HCT116 (cell line): ENCODE measurements at regions of chr6 and their contacts with region 1.

Region 1: GRCh38 chr6:139364302-139364981 is 10.0 kb downstream of the CITED2 start:
- DNase-seq: no peak
- ATAC-seq: peak; percentile 67
- H3K4me3 ChIP-seq: no peak overlapping the region
- H3K27ac ChIP-seq: no peak overlapping the region
- H3K4me1 ChIP-seq: peaks cover 5 to 6% of the 10 kb centered on the region in 2 experiments; a peak in 3 of 4 replicates
- H3K27me3 ChIP-seq: no peaks in the 10 kb centered on the region
- CTCF ChIP-seq: peak; percentile 19 to 82 (median 69); a peak in 3 of 6 replicates
- POLR2A ChIP-seq: no peak
- RAD21 ChIP-seq: peak; percentile 94

Region 2: GRCh38 chr6:138115877-138116660 is 1248.4 kb before region 1 on chr6:
- CTCF ChIA-PET with region 1: interaction called, 26 read pairs
- POLR2A ChIA-PET with region 1: no interaction called
- RAD21 ChIA-PET with region 1: no interaction called
- intact Hi-C with region 1: loop called (anchors 1 kb)
- DNase-seq: peak; percentile 58
- ATAC-seq: peak; percentile 92
- H3K4me3 ChIP-seq: no peak overlapping the region; a peak in 1 of 4 replicates
- H3K27ac ChIP-seq: no peak overlapping the region
- H3K4me1 ChIP-seq: peaks cover 0 to 8% of the 10 kb centered on the region in 2 experiments; a peak in 1 of 4 replicates
- H3K27me3 ChIP-seq: no peaks in the 10 kb centered on the region
- CTCF ChIP-seq: peak; percentile 48 to 85 (median 78); a peak in 5 of 6 replicates
- POLR2A ChIP-seq: no peak
- RAD21 ChIP-seq: peak; percentile 94

Region 3: GRCh38 chr6:138692058-138692977 is 672.1 kb before region 1 on chr6:
- CTCF ChIA-PET with region 1: no interaction called
- POLR2A ChIA-PET with region 1: no interaction called
- RAD21 ChIA-PET with region 1: no interaction called
- intact Hi-C with region 1: loop called (anchors 5 kb)
- DNase-seq: no peak
- ATAC-seq: peak; percentile 58
- H3K4me3 ChIP-seq: peak overlapping the region; percentile 72 to 83
- H3K27ac ChIP-seq: peak overlapping the region; percentile 88
- H3K4me1 ChIP-seq: peaks cover 14 to 25% of the 10 kb centered on the region in 2 experiments
- H3K27me3 ChIP-seq: no peaks in the 10 kb centered on the region
- CTCF ChIP-seq: peak; percentile 38 to 79 (median 77); a peak in 4 of 6 replicates
- POLR2A ChIP-seq: no peak
- RAD21 ChIP-seq: peak; percentile 33; the same call in 1 of the 2 replicates

Region 4: DNA sequence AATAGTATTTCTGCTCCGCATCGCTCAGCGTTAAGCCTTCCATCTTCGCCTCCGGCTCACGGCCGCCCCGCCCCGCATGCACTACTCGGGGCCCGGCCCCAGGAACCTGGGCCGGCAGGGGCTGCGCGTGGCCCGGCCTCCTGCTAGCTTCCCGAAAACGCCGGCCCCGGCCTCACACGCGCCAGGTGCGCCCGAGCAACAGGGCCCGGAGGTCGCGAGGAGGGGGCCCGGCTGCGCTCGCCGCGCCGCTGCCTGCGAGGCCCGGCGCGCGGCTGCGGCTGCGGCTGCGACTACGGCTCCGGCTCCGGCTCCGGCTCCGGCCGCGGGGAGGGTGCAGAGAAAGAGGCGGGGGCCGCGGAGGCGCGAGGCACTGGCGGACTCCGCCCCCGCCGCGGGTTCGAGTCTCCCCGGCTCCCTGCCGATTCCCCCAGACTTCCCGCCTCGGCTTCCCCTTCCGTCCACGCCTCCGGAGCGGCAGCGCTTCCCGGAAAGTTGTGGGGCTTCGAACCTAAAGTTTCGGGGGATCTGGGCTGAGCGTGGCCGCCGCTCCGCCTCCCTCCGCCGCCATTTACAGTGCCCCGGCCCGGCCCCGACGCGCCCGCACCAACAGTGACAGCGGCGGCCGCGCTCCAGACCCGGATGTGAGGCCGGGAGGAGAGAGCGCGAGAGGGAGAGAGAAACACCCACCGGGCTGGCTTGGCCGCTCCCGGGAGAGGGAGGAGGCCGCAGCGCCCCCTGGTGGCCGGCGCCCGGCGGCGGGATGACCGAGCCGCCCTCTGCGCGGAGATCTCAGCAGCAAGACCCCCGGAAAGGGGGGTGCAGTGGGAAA is 376.6 kb before region 1 on chr6 and contains the start of gene REPS1:
- CTCF ChIA-PET with region 1: interaction called, 3 read pairs
- POLR2A ChIA-PET with region 1: no interaction called
- RAD21 ChIA-PET with region 1: no interaction called
- intact Hi-C with region 1: loop called (anchors 10 kb)
- DNase-seq: peak; percentile 78
- ATAC-seq: peak; percentile 90
- H3K4me3 ChIP-seq: peak within 1 kb of the TSS; percentile 81 to 83
- H3K27ac ChIP-seq: peak within 1 kb of the TSS; percentile 72
- H3K4me1 ChIP-seq: peaks cover 16 to 36% of the 10 kb centered on the region in 2 experiments; a peak in 3 of 4 replicates
- H3K27me3 ChIP-seq: no peaks in the 10 kb centered on the region
- CTCF ChIP-seq: peak; percentile 73 to 82 (median 80)
- POLR2A ChIP-seq: peak; percentile 29
- RAD21 ChIP-seq: peak; percentile 80
- total RNA-seq, gene REPS1: 52.7 TPM

Region 5: DNA sequence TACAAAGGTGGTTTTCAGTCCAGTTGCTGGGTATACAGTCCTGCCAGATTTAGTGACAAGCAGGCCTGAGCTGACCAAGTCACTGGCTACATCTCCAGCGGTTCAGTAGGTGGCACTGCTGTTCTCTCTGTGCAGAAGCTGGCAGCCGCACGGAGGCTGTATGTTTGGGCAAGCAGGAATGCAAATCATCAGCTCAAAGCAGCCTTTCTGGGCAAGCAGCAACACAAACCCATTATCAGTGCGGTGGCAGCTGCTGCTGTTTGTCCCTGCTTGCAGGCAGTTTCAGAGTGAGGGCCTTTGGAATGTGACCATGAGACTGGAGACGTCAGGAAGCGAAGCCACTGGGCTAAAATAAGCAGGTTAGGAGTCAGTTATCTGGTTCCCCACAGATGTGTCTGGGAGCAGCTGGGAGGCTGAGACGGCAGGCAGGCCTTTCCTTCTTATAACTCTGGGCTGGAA is 145.1 kb before region 1 on chr6:
- CTCF ChIA-PET with region 1: interaction called, 48 read pairs
- POLR2A ChIA-PET with region 1: interaction called, 4 read pairs
- RAD21 ChIA-PET with region 1: interaction called, 14 to 18 read pairs
- intact Hi-C with region 1: loop called (anchors 1 kb)
- DNase-seq: peak; percentile 73
- ATAC-seq: peak; percentile 100
- H3K4me3 ChIP-seq: no peak overlapping the region
- H3K27ac ChIP-seq: no peak overlapping the region
- H3K4me1 ChIP-seq: peaks cover 0 to 3% of the 10 kb centered on the region in 2 experiments; a peak in 1 of 4 replicates
- H3K27me3 ChIP-seq: no peaks in the 10 kb centered on the region
- CTCF ChIP-seq: peak; percentile 63 to 77 (median 72); a peak in 5 of 6 replicates
- POLR2A ChIP-seq: no peak
- RAD21 ChIP-seq: peak; percentile 90

Region 6: DNA sequence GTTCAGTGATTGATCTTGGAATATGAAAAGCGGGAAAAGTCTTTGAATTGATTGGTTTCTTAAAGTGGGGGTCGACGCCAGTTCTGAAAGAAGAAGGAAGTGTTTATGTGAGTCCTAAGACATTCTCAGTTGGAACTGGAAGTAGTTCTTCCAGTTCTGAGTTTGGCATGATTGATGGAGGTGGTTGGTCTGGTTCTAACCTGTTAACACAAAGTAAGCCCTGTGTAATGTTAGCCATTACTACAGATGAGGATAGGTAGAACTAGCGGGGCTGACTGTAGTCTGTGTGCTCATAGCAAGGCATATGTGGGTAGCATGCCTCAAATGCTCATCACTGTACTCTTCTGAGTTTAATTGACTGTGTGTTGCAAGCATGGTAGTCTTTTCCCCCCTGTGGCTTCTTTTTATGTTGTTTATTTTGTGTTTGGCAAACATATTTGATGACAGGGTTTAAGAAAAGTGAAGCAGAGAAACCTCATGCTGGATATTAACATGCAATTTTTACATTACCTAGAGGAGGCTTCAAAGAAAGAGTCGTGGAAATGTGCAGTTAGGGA is 14.9 kb before region 1 on chr6:
- CTCF ChIA-PET with region 1: no interaction called
- POLR2A ChIA-PET with region 1: no interaction called
- RAD21 ChIA-PET with region 1: no interaction called
- intact Hi-C with region 1: no loop called
- DNase-seq: no peak
- ATAC-seq: no peak
- H3K4me3 ChIP-seq: no peak overlapping the region
- H3K27ac ChIP-seq: no peak overlapping the region
- H3K4me1 ChIP-seq: no peaks in the 10 kb centered on the region
- H3K27me3 ChIP-seq: no peaks in the 10 kb centered on the region
- CTCF ChIP-seq: no peak
- POLR2A ChIP-seq: no peak
- RAD21 ChIP-seq: no peak

Region 7: DNA sequence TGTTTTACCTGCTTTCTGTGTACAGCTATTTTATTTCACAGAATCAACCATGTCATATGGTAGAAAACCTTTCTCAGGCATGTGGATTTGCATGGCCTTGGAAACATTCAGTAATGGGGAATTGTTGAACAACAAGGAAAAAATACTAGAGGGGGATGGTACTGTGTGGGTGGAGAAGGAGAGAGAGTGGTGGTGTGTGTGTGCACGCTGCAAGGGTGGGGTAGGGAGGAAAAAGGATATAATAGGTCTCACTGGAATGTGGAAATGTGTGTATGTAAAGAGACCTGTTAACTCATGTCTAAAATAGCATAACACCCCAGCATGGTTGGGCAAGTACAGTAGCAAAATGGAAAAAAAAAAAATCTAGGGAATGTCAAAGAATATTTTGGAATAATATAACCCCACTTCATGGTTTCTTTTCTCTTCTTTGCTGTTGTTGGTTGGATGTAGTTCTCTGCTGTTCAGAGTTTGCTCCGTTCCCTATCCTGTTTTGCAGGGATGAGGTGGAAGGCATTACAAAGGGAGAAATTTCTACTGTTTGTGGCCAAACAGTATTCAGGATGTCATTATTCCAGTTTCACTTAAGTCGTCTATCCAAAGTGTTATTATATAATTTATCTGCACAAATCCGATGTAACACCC is 103.9 kb after region 1 on chr6:
- CTCF ChIA-PET with region 1: no interaction called
- POLR2A ChIA-PET with region 1: no interaction called
- RAD21 ChIA-PET with region 1: no interaction called
- intact Hi-C with region 1: no loop called
- DNase-seq: no peak
- ATAC-seq: no peak
- H3K4me3 ChIP-seq: no peak overlapping the region
- H3K27ac ChIP-seq: no peak overlapping the region
- H3K4me1 ChIP-seq: no peaks in the 10 kb centered on the region; a peak in 1 of 4 replicates
- H3K27me3 ChIP-seq: no peaks in the 10 kb centered on the region
- CTCF ChIP-seq: no peak
- POLR2A ChIP-seq: no peak
- RAD21 ChIP-seq: no peak